Psoas muscle (tissue), 8 donors: ENCODE measurements at regions of chr15 and their contacts with region 1.

Region 1: GRCh38 chr15:55637086-55637485 is 48.9 kb upstream of the PYGO1 start:
- DNase-seq: no peak
- ATAC-seq: peak in 3 of 4 donors; percentile 27 to 66 (median 44)
- H3K4me3 ChIP-seq: no peak overlapping the region
- H3K27ac ChIP-seq: peak overlapping the region; percentile 75
- H3K4me1 ChIP-seq: peaks cover 14% of the 10 kb centered on the region
- H3K27me3 ChIP-seq: no peaks in the 10 kb centered on the region
- CTCF ChIP-seq: no peak

Region 2: DNA sequence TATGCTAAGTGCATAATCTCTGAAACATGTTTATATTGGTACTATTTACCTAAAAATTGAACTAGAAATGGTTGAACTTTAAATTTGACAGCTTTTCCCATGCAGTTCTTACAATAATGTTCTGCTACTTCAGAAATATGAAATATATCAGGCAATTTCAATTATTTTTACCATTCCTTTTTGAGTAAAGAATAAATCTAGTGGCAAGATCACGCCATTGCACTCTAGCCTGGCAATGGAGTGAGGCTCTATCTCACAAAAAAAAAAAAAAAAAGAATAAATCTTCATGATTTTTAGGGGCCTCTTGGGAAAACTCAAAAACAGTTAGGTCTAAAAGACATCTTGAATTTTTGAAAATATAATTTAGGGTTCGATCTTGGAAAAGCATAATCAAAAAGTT is 118.4 kb before region 1 on chr15:
- intact Hi-C with region 1: loop called (anchors 5 kb)
- DNase-seq: no peak
- ATAC-seq: no peak
- H3K4me3 ChIP-seq: no peak overlapping the region
- H3K27ac ChIP-seq: no peak overlapping the region
- H3K4me1 ChIP-seq: no peaks in the 10 kb centered on the region
- H3K27me3 ChIP-seq: no peaks in the 10 kb centered on the region
- CTCF ChIP-seq: peak; percentile 5